CD14-positive monocyte (primary cell): ENCODE measurements at regions of chr11 and their contacts with region 1.

Region 1: DNA sequence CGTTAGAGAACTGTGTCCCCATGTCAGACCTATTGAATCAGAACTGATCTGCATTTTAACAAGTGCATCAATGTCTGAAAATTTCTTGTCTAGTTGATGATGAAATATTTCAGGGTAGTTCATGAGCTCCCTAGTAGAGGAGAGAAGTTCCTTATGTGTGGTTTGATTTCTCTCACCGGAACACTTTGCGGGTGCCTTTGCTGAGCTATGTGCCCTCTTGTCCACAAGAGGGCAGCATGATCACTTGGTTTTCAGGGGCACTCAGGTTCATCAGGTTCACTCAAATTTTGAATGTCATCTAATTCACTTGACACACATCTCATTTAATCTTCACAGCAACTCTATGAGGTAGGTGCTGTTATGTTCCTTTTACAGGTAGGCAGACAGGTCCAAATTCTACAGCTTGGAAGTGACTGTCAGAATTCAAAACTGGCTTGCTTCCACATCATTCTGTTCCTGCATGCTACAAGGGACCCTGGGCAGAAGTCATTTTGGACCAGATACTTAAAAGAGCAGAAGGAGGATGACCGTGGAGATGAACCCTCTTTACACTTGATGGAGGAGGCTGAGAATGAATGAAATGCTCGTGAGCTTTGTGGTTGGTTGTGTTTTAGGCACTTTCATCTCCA is 55.6 kb downstream of the P4HA3 start:
- DNase-seq: peak; percentile 49 to 63 (median 60)
- H3K4me3 ChIP-seq: no peak overlapping the region
- H3K4me3 Mint-ChIP-seq: no peak overlapping the region
- H3K27ac ChIP-seq: no peak overlapping the region
- H3K27ac Mint-ChIP-seq: no peak overlapping the region
- H3K4me1 ChIP-seq: no peaks in the 10 kb centered on the region
- H3K4me1 Mint-ChIP-seq: peaks cover 5% of the 10 kb centered on the region
- H3K27me3 ChIP-seq: no peaks in the 10 kb centered on the region
- H3K27me3 Mint-ChIP-seq: peaks cover 0 to 1% (median 0%) of the 10 kb centered on the region in 3 donors
- CTCF ChIP-seq: peak; percentile 91

Region 2: GRCh38 chr11:74559934-74560309 is 304.1 kb after region 1 on chr11:
- intact Hi-C with region 1: loop called in 1 of 2 experiments (anchors 10 kb)
- DNase-seq: no peak
- H3K4me3 ChIP-seq: no peak overlapping the region
- H3K4me3 Mint-ChIP-seq: no peak overlapping the region
- H3K27ac ChIP-seq: no peak overlapping the region
- H3K27ac Mint-ChIP-seq: no peak overlapping the region
- H3K4me1 ChIP-seq: no peaks in the 10 kb centered on the region
- H3K4me1 Mint-ChIP-seq: no peaks in the 10 kb centered on the region
- H3K27me3 ChIP-seq: no peaks in the 10 kb centered on the region
- H3K27me3 Mint-ChIP-seq: peaks cover 0 to 4% (median 2%) of the 10 kb centered on the region in 3 donors
- CTCF ChIP-seq: no peak